Right ventricle myocardium inferior (tissue), 1 donor: ENCODE measurements at regions of chr7 and their contacts with region 1.

Region 1: GRCh38 chr7:98826387-98827231 is 43.2 kb downstream of the TMEM130 start:
- DNase-seq: peak; percentile 86
- ATAC-seq: peak; percentile 96

Region 2: DNA sequence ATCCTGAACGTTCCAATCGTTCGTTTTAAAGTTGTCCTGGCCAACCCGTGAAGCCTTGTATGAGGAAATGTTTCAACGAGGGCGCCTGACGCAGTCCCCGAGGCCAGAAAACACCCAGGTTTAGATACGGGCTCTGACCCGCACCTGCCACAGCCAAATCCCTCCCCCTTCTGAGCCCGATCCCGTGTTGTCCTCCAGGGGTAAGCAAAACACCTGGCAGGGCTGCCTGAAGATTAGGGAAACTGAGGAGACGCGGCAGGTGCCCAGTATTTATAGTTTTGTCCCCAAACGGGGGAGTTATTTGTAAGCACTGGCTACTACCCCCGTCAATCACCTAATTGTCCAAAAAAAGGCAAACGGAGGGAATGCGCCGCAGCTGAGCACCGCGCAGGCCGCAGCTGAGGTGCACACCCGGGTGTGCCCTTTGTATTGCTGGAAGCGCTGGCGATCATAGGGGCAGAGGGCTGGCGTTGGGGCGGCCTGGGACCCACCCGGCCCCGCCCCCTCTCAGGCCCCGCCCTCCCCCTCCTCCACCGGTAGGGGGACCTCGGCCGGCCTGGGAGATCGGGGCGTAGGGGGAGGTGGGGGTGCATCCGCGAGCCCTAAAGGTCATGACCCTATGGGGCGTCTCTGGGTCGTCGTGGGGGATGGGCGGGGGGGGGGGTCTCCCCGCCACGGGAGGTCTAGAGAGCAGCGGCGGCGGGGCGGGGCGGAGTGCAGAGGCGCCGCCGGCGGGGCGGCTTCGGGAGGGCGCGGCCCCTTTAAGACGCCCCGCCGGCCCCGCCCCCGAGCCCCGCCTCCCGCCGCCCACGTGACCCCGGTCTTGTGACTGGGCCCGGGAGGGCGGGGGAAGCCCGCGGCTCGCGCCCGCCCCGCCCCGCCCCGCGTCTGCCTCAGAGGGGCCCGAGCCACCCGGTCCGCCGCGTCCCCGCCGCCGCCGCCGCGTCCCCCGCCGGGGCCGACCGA is 545.5 kb before region 1 on chr7 and contains the start of gene BRI3:
- intact Hi-C with region 1: loop called (anchors 5 kb)
- DNase-seq: peak; percentile 97
- ATAC-seq: peak; percentile 84
- total RNA-seq, gene BRI3: 240 TPM

Region 3: GRCh38 chr7:98777051-98777450 is 49.6 kb before region 1 on chr7:
- intact Hi-C with region 1: loop called (anchors 2 kb)
- DNase-seq: no peak
- ATAC-seq: peak; percentile 61